SK-N-SH (cell line): ENCODE measurements at regions of chr4 and their contacts with region 1.

Region 1: GRCh38 chr4:165505991-165506837 is 127.4 kb downstream of the CPE start:
- DNase-seq: no peak
- H3K4me3 ChIP-seq: no peak overlapping the region
- H3K27ac ChIP-seq: no peak overlapping the region; a peak in 1 of 4 replicates
- H3K4me1 ChIP-seq: peaks cover 0 to 8% of the 10 kb centered on the region in 2 experiments; a peak in 2 of 4 replicates
- H3K27me3 ChIP-seq: no peaks in the 10 kb centered on the region
- CTCF ChIP-seq: no peak
- EP300 ChIP-seq: no peak
- RAD21 ChIP-seq: no peak

Region 2: DNA sequence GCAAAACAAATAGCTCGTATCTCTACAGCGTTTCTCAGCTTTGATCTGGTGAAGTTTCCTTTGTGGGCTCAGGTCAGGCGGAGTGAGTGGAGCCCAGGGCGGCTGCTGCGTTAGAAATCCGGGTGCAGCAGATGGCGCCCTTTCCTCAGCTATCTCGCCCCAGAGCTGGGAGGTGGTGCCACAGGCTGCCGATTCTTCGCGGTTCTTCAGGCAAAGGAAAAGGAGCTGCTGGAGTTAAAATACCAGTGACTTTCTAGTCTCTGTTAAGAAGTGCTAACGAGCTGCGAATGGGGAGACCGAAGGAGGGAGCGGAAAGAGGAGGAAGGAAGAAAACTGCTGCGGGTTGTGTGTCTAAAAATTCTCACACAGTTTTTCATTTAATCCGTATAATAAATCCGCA is 12.9 kb before region 1 on chr4:
- CTCF ChIA-PET with region 1: interaction called, 10 read pairs
- POLR2A ChIA-PET with region 1: no interaction called
- DNase-seq: peak; percentile 36
- H3K4me3 ChIP-seq: no peak overlapping the region; a peak in 1 of 4 replicates
- H3K27ac ChIP-seq: no peak overlapping the region
- H3K4me1 ChIP-seq: no peaks in the 10 kb centered on the region
- H3K27me3 ChIP-seq: no peaks in the 10 kb centered on the region
- CTCF ChIP-seq: peak; percentile 45
- EP300 ChIP-seq: no peak
- RAD21 ChIP-seq: peak; percentile 59